T-cell (primary cell): ENCODE measurements at regions of chr15 and their contacts with region 1.

Region 1: GRCh38 chr15:55743729-55744655 is 1.0 kb upstream of the PRTG start:
- DNase-seq: no peak
- ATAC-seq: no peak
- H3K4me3 ChIP-seq: no peak overlapping the region
- H3K4me3 Mint-ChIP-seq: peak overlapping the region; percentile 46 to 66 (median 53)
- H3K27ac ChIP-seq: no peak overlapping the region
- H3K27ac Mint-ChIP-seq: peak overlapping the region in 1 of 2 donors; percentile 14
- H3K4me1 ChIP-seq: peaks cover 7 to 16% of the 10 kb centered on the region in 2 experiments
- H3K4me1 Mint-ChIP-seq: peaks cover 0 to 4% (median 4%) of the 10 kb centered on the region in 3 donors
- H3K27me3 ChIP-seq: peaks cover 3 to 30% of the 10 kb centered on the region in 2 experiments
- H3K27me3 Mint-ChIP-seq: peaks cover 24 to 32% of the 10 kb centered on the region in 2 donors

Region 2: DNA sequence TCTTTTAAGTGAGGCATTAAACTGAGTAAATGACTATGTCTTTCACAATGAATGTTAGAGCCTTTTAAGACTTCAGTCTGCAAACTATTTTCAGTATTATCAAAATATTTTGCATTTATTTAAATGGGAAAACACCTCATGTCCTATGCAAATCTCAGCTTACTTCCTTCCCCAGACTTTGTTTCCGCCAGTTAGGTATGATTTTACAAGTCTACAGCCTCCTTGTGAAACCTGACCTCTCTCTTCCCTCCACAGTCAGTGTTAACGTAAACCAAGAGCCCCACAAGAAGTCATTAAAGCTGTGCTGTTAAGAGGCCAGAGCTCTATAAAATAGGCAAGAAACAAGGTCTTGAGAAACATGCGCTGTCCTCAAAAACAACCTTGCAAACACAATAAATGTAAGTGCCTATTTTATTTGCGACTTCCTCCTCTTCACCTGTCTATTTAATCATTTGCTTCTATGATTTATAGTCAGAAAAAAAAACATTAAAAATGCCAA is 49.3 kb before region 1 on chr15:
- CTCF ChIA-PET with region 1: no interaction called
- POLR2A ChIA-PET with region 1: interaction called in 1 of 2 experiments, 13 read pairs
- DNase-seq: no peak
- ATAC-seq: no peak
- H3K4me3 ChIP-seq: no peak overlapping the region
- H3K4me3 Mint-ChIP-seq: no peak overlapping the region
- H3K27ac ChIP-seq: no peak overlapping the region
- H3K27ac Mint-ChIP-seq: no peak overlapping the region
- H3K4me1 ChIP-seq: no peaks in the 10 kb centered on the region
- H3K4me1 Mint-ChIP-seq: no peaks in the 10 kb centered on the region
- H3K27me3 ChIP-seq: peaks cover 0 to 13% of the 10 kb centered on the region in 2 experiments
- H3K27me3 Mint-ChIP-seq: peaks cover 0 to 10% of the 10 kb centered on the region in 2 donors